Gastrocnemius medialis (tissue), 4 donors: ENCODE measurements at regions of chr3 and their contacts with region 1.

Region 1: GRCh38 chr3:64405211-64405835 is 180.1 kb upstream of the PRICKLE2 start:
- DNase-seq: no peak
- ATAC-seq: no peak
- H3K4me3 ChIP-seq: no peak overlapping the region
- H3K27ac ChIP-seq: no peak overlapping the region
- H3K4me1 ChIP-seq: no peaks in the 10 kb centered on the region
- H3K27me3 ChIP-seq: no peaks in the 10 kb centered on the region
- CTCF ChIP-seq: no peak
- POLR2A ChIP-seq: no peak

Region 2: DNA sequence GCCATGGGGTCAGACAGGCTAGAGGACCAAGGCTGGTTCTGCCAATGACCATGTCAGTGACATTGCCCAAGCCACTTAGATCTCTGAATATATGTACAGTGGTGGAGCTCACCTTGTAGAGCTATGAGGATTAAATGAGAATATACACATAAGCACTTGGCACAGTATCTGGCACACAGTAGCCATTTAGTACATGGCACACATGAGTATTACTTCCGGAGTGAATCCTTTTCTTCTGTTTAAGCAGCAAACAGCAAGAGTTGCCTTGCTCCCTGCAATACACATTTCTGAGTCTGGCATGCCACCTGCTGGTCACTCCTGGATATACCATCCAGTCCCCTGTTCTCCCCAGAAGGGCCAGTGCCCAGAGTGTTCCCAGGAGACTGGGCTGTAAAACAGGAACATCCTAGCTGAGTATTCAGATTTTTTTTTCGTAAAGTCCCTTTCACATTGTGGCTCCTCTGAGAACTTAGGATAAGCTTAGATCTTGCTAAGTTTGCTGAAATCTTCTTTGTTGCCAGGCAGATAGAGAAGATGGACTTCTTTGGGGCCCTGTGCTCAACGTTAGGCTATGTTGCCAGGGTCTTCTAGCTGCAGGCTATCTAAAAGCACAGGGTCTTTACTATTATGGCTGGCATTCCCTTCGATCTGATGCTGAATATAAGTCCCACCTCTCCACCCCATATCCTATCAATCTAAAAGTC is 79.1 kb after region 1 on chr3:
- in situ Hi-C with region 1: no loop called
- intact Hi-C with region 1: loop called (anchors 10 kb)
- DNase-seq: peak; percentile 28 to 54
- ATAC-seq: peak; percentile 79 to 88
- H3K4me3 ChIP-seq: no peak overlapping the region
- H3K27ac ChIP-seq: no peak overlapping the region
- H3K4me1 ChIP-seq: peaks cover 2 to 7% of the 10 kb centered on the region in 2 donors
- H3K27me3 ChIP-seq: no peaks in the 10 kb centered on the region
- CTCF ChIP-seq: peak; percentile 39 to 81 (median 78)
- POLR2A ChIP-seq: no peak

Region 3: GRCh38 chr3:64505419-64505818 is 100.1 kb after region 1 on chr3:
- in situ Hi-C with region 1: no loop called
- intact Hi-C with region 1: no loop called
- DNase-seq: no peak
- ATAC-seq: no peak
- H3K4me3 ChIP-seq: no peak overlapping the region
- H3K27ac ChIP-seq: no peak overlapping the region
- H3K4me1 ChIP-seq: no peaks in the 10 kb centered on the region
- H3K27me3 ChIP-seq: no peaks in the 10 kb centered on the region
- CTCF ChIP-seq: no peak
- POLR2A ChIP-seq: no peak